Mucosa of descending colon (tissue), 3 donors: ENCODE measurements at regions of chr3 and their contacts with region 1.

Region 1: DNA sequence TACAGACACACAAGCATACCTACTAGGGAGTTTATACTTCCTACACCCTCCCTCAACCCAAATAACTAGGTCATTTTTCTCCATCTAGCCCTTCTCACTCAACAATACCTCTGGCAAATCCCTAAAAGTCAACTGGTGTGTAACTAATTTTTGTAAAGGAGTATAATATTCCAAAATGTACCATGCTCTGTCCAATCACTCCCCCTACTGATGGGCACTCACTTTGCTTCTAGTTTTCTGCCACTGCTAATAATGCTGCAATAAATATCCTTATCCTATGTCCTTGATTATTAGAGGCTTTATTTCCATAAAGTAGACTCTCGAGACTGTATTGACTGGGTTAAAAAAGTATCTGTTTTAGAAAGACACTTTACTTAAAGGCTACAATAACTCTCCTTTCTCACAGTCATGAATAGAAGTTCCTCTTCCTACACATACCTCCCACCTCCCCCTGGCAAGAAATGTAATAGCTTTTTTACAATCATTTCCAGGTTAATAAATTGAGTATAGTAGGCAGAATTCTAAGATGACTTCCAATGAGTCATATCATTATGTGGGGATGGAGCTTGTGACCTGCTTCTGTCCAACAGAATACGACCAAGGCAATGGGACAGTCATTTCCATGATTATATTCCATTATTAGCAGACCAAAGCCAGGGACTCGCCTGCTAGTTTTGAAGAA is 30.0 kb downstream of the SHQ1 start:
- DNase-seq: peak in 1 of 3 donors; percentile 23
- ATAC-seq: no peak
- H3K4me3 ChIP-seq: no peak overlapping the region
- H3K4me1 ChIP-seq: peaks cover 27% of the 10 kb centered on the region
- CTCF ChIP-seq: peak; percentile 4

Region 2: DNA sequence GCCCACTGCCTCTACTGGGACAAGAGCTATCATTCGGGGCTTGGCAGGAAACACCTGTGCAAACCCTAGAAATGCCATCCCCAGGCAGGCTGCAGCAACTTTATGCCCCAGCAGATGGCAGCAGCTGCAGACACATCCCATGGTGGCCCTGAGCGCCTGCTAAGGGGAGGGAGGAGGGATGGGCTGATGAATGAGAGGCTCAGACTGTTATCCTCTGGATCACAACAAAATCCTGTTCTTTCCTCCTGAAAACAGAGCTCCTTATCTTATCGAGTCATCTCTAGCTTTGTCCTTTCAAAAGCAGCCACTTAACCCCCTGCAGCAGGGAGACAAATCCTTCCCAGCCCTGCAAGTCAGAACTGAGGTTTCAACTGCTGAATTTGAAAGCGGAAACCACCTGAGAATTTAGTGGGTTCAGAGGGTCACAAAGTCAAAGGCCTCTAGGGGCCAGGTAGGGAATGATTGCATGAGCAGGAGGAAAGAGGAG is 942.7 kb before region 1 on chr3:
- intact Hi-C with region 1: loop called (anchors 10 kb)
- DNase-seq: peak; percentile 71 to 90 (median 87)
- ATAC-seq: peak; percentile 98
- H3K4me3 ChIP-seq: no peak overlapping the region
- H3K4me1 ChIP-seq: peaks cover 15% of the 10 kb centered on the region
- CTCF ChIP-seq: peak; percentile 93

Region 3: GRCh38 chr3:71962561-71963240 is 855.5 kb before region 1 on chr3:
- intact Hi-C with region 1: loop called in 1 of 2 experiments (anchors 10 kb)
- DNase-seq: no peak
- ATAC-seq: no peak
- H3K4me3 ChIP-seq: no peak overlapping the region
- H3K4me1 ChIP-seq: no peaks in the 10 kb centered on the region
- CTCF ChIP-seq: no peak

Region 4: DNA sequence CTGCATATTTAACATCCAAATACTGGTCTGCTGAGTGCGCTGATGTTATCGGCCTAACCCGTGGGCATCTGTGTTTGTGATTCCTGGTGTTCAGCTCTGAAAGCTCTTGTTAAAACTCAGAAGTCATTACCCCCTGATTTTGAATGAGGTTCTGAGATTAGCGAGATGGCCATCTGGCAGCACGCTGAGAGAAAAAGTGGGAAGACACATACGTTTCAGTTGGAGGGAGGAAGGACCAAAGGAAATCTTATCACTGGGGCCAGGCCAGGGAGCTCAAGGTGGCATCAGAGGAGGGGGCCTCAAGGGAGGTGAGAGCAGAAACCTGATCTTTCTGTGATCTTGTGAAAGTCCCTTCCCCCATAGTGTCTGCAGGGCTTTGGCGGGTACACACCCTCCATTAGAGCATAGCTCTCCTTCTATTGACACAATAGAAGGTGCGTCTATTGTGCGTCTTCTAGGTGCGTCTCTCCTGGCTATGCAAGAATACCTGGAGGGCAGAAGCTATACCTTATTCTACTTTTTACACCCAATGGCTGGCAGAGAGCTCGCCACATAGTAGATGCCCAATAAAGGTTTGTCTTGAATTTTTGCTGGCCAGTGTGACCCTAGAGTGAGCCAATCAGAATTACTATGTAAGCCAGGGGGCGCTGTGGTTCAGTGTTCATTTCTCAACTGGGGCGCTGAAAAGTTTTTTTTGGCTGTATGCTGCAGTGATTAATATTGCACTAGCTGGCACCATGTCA is 152.4 kb before region 1 on chr3:
- intact Hi-C with region 1: loop called in 1 of 2 experiments (anchors 5 kb)
- DNase-seq: peak in 2 of 3 donors; percentile 35 to 88
- ATAC-seq: peak; percentile 82
- H3K4me3 ChIP-seq: no peak overlapping the region
- H3K4me1 ChIP-seq: no peaks in the 10 kb centered on the region
- CTCF ChIP-seq: no peak